Activated CD8-positive, alpha-beta memory T cell treated with anti-CD3 and anti-CD28 coated beads, Interleukin-2, amount 10 ng/mL, durations not matched to agents 7 days and 5 days (primary cell): ENCODE measurements at regions of chr1 and their contacts with region 1.

Region 1: GRCh38 chr1:181088079-181089016 is at the start of gene IER5:
- DNase-seq: peak; percentile 97
- ATAC-seq: peak; percentile 81
- H3K4me3 Mint-ChIP-seq: peak within 1 kb of the TSS; percentile 96
- H3K27ac Mint-ChIP-seq: peak within 1 kb of the TSS; percentile 97
- H3K4me1 Mint-ChIP-seq: peaks cover 47% of the 10 kb centered on the region
- H3K27me3 Mint-ChIP-seq: no peaks in the 10 kb centered on the region
- total RNA-seq, gene IER5: 50.4 to 67.0 TPM

Region 2: DNA sequence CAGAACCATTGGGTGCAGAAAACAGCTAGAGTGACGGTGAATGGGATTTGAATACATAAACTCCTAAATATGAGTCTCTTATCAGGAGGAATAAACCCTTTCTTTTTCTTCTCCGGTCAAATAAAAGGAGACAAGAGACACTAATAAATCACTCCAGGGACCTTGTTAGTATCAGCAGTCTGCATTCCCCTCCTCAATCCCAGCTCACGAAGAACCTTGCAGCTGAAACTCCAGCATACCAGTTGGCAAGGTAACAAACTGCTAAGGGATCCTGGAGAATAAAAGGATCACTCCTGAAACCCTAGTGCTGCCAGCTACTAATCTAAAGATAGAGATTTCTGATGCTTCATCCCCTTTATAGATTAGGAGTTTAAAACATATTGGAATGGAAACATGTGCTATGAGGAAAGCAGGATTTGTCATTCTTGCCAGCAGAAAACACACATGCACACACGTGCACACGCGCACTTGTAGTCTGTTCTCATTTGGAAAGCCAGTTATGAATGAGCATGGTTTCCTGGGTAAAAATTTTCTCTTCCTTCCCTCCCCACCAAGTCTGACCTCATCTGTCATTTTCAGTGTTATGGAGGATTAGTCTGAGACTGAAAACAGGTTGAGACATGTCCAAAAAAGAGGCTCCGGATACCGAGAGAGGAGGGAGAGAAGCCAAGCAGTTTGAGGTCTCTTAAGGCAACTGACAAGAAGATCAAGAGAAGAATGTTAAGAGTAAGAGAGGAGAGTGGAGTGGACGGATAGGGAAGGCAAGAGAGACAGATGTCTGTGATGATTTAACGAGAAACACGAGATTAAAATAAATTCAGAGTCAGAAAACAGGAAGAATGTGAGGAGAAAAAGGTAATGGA is 11.0 kb after region 1 on chr1:
- CTCF ChIA-PET with region 1: interaction called, 54 read pairs
- DNase-seq: peak; percentile 77
- ATAC-seq: peak; percentile 74
- H3K4me3 Mint-ChIP-seq: peak overlapping the region; percentile 55
- H3K27ac Mint-ChIP-seq: peak overlapping the region; percentile 89
- H3K4me1 Mint-ChIP-seq: peaks cover 86% of the 10 kb centered on the region
- H3K27me3 Mint-ChIP-seq: no peaks in the 10 kb centered on the region

Region 3: DNA sequence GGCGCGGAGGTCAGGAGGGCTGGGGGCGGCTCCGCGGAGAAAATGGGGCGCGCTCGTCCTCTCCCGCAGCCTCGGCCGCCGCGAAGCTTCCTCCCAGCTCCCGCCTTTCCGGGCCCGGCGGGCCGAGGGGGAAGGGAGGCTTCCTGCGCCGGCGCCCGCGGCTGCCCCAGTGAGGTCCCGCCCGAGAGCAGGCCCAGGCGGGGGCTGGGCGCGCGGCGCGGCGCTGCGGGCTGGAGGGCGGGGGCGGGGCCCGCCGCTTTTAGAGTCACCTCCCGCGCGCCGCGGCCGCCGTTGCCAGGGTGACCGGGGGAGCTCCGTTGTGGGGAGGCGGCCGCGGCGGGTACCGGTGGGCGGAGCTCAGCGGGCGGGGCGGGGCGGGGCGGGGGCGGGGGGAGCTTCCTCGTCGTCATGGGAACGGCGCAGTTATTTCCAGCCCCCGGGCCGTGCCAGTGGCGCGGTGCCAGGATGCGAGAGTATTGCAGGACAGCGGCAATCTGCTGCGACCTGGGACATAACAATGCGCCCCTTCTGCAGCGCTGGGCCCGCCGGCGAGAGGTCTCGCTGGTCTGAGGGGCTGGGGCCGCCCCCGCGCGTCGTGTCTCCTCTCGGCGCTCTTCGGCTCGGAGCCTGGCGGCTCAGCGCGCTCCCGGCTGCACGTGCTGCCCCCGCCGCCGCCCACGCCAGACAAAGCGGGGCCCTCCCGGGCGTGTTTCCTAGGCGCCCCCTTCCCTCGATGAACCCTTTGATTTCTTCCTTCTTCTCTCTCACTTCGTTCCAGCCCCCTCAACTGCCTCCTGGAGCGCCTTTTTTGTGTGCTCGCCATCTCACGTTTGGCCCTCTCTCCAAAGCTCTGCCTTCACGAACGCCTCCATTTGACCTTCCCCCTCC is 17.0 kb after region 1 on chr1:
- CTCF ChIA-PET with region 1: interaction called, 54 read pairs
- DNase-seq: peak; percentile 93
- ATAC-seq: peak; percentile 87
- H3K4me3 Mint-ChIP-seq: peak overlapping the region; percentile 78
- H3K27ac Mint-ChIP-seq: peak overlapping the region; percentile 69
- H3K4me1 Mint-ChIP-seq: peaks cover 60% of the 10 kb centered on the region
- H3K27me3 Mint-ChIP-seq: peaks cover 42% of the 10 kb centered on the region

Region 4: GRCh38 chr1:181134543-181135362 is 46.4 kb after region 1 on chr1:
- CTCF ChIA-PET with region 1: interaction called, 91 read pairs
- DNase-seq: peak; percentile 63
- ATAC-seq: peak; percentile 62
- H3K4me3 Mint-ChIP-seq: peak overlapping the region; percentile 44
- H3K27ac Mint-ChIP-seq: peak overlapping the region; percentile 90
- H3K4me1 Mint-ChIP-seq: peaks cover 71% of the 10 kb centered on the region
- H3K27me3 Mint-ChIP-seq: no peaks in the 10 kb centered on the region